Activated CD4-positive, alpha-beta memory T cell treated with anti-CD3 and anti-CD28 coated beads for 36 hours (primary cell): ENCODE measurements at regions of chr1 and their contacts with region 1.

Region 1: GRCh38 chr1:221777431-221778072 is 35.7 kb upstream of the DUSP10 start:
- DNase-seq: peak; percentile 73
- H3K4me3 Mint-ChIP-seq: peak overlapping the region; percentile 38
- H3K27ac Mint-ChIP-seq: peak overlapping the region; percentile 79
- H3K4me1 Mint-ChIP-seq: peaks cover 71% of the 10 kb centered on the region
- H3K27me3 Mint-ChIP-seq: no peaks in the 10 kb centered on the region

Region 2: DNA sequence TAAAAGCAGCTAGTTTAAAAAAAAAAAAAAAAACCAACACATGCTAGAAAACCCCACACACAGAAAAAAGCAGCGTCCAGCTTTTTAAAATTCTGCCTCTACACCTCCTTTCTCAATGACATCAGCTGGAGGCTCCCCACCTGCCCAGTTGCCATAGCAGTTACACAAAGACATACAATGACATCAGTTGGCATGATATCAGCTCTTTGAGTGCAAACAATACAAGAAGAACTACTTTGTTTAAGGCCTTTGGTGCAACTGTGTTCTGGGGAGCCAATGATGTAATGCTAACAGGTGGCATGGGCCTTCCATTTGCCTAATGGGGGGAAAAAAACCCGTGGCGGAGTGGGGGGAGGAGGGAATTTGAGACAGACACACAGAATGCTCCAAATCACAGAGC is 68.6 kb before region 1 on chr1:
- CTCF ChIA-PET with region 1: no interaction called
- POLR2A ChIA-PET with region 1: interaction called, 3 read pairs
- intact Hi-C with region 1: loop called (anchors 1 kb)
- DNase-seq: peak; percentile 63
- H3K4me3 Mint-ChIP-seq: peak overlapping the region; percentile 26
- H3K27ac Mint-ChIP-seq: peak overlapping the region; percentile 86
- H3K4me1 Mint-ChIP-seq: peaks cover 60% of the 10 kb centered on the region
- H3K27me3 Mint-ChIP-seq: no peaks in the 10 kb centered on the region

Region 3: DNA sequence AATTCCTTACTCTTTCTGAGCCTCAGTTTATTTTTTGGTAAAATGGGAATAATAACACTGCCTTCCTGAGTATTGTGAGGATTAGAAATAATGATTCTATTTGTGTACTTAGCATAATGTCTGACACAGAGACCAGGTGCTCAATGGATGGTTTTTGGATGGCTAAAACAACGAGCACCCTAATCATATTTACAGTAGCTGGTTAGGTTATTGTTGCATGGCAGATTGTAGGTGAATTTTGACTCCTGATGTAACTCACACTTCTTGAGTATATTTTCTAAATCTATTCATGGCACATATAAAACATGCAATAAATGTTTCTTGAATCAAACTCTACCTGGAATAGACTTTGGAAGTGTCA is 23.7 kb before region 1 on chr1:
- CTCF ChIA-PET with region 1: interaction called, 4 read pairs
- POLR2A ChIA-PET with region 1: interaction called, 7 read pairs
- intact Hi-C with region 1: loop called (anchors 1 kb)
- DNase-seq: no peak
- H3K4me3 Mint-ChIP-seq: no peak overlapping the region
- H3K27ac Mint-ChIP-seq: peak overlapping the region; percentile 19
- H3K4me1 Mint-ChIP-seq: peaks cover 33% of the 10 kb centered on the region
- H3K27me3 Mint-ChIP-seq: no peaks in the 10 kb centered on the region

Region 4: DNA sequence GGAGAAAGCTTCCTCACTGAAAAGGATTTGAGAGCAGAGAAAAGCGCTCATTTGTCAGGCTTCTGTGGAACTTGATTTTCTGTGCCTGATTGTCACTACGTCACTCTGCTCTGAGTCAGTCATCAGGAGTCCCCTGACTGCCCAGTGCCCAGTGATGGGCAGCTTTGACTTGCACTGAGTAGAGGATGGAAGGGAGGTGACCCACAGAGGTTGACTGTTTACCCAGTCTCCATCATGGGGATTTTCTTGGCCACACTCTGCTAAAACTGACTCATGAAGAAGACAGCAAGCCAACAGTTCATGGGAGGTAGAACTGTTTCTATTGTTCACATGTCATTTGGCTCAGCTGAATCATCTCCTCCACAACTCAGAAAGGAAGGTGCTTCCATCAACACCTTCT is 46.5 kb after region 1 on chr1:
- CTCF ChIA-PET with region 1: interaction called, 3 read pairs
- POLR2A ChIA-PET with region 1: interaction called, 4 read pairs
- intact Hi-C with region 1: loop called (anchors 1 kb)
- DNase-seq: peak; percentile 71
- H3K4me3 Mint-ChIP-seq: no peak overlapping the region
- H3K27ac Mint-ChIP-seq: peak overlapping the region; percentile 50
- H3K4me1 Mint-ChIP-seq: peaks cover 55% of the 10 kb centered on the region
- H3K27me3 Mint-ChIP-seq: no peaks in the 10 kb centered on the region

Region 5: DNA sequence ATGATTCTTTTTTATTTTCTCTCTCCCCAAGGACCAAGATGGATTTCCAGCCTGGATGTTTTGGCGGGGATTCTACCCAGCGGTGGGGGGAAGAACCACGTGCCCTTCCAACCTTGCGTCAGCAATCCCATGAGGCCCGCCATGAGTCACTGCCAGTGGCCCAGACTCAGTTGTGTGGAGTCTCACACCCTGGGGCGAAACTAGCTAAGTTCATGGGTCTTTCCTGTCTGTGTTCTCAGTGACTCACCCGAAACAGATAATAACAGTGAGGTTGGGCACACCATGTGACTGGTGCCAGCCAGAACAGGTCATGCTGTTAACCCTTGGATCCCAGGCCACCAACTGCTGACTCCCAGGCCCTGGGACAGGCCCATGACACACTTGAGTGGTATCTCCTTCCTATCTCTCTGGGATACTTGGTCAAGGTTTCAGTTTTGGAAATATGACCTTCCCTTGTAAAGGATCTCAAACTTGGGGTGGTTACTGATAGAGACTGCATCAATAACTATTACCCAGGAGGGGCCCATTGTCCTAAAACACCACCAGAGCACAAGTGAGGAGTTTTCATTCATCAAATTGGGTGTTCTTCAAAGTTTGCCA is 62.3 kb after region 1 on chr1:
- CTCF ChIA-PET with region 1: interaction called, 3 read pairs
- POLR2A ChIA-PET with region 1: interaction called, 4 read pairs
- intact Hi-C with region 1: loop called (anchors 1 kb)
- DNase-seq: peak; percentile 88
- H3K4me3 Mint-ChIP-seq: no peak overlapping the region
- H3K27ac Mint-ChIP-seq: peak overlapping the region; percentile 74
- H3K4me1 Mint-ChIP-seq: peaks cover 38% of the 10 kb centered on the region
- H3K27me3 Mint-ChIP-seq: peaks cover 6% of the 10 kb centered on the region